CD8-positive, alpha-beta T cell (primary cell): ENCODE measurements at regions of chr1 and their contacts with region 1.

Region 1: GRCh38 chr1:6784560-6785317 is 515 bp upstream of the CAMTA1 start:
- DNase-seq: peak; percentile 97 to 100 (median 99)
- ATAC-seq: peak; percentile 81
- H3K4me3 ChIP-seq: peak overlapping the region; percentile 80
- H3K4me3 Mint-ChIP-seq: peak overlapping the region; percentile 95
- H3K27ac ChIP-seq: peak overlapping the region; percentile 73 to 93
- H3K27ac Mint-ChIP-seq: peak overlapping the region; percentile 91
- H3K4me1 ChIP-seq: peaks cover 25% of the 10 kb centered on the region
- H3K4me1 Mint-ChIP-seq: peaks cover 44% of the 10 kb centered on the region
- H3K27me3 ChIP-seq: no peaks in the 10 kb centered on the region
- H3K27me3 Mint-ChIP-seq: no peaks in the 10 kb centered on the region
- CTCF ChIP-seq: no peak

Region 2: DNA sequence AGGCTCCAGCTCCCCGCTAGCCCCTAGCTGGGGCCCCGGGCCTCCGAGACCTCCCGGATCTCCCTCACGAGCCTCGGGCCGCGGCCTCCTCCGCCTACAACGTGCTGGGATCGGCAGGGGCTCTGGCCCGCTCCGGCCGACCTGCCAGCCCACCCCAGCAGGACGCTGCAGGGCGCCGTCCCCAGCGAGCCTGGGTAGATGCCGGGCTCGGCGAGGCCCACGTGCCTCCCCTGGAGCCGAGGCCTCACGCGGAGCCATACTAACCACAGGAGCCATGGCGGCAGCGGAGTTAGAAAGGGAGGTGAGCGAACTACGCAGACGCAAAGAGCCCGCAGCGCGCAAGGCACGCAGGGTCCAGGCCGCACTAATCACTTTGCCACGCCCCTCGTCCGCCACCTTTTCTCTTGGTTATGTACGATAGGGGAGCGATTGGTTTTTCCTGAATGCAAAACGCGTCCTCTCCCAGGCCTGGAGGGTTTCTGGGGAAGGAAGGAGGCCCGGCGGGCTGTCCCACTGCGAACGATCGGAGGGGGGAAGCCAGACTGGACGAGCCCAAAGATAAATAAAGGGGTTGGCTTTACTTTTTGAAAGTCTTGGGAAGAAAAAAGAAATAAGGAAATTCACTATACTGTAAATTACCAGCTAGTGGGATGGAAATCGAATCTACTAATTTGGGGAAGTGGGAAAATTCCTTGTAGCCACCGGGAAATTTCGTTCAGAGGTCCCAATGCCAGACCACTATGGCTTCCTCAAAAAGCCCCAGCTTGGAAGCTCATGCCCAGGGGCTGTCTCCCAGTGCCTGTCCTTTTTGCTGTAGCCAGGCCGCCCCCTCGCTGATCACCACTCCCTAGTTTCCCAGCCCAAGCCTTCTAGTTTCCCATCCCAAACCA is 585.2 kb before region 1 on chr1 and contains the start of gene RPL22:
- CTCF ChIA-PET with region 1: no interaction called
- POLR2A ChIA-PET with region 1: no interaction called
- intact Hi-C with region 1: loop called (anchors 2 to 5 kb)
- DNase-seq: peak; percentile 93 to 99 (median 97)
- ATAC-seq: peak; percentile 97
- H3K4me3 ChIP-seq: peak within 1 kb of the TSS; percentile 83 to 97
- H3K4me3 Mint-ChIP-seq: peak within 1 kb of the TSS; percentile 84
- H3K27ac ChIP-seq: peak within 1 kb of the TSS; percentile 68 to 82
- H3K27ac Mint-ChIP-seq: peak within 1 kb of the TSS; percentile 92
- H3K4me1 ChIP-seq: peaks cover 24% of the 10 kb centered on the region
- H3K4me1 Mint-ChIP-seq: peaks cover 42% of the 10 kb centered on the region
- H3K27me3 ChIP-seq: no peaks in the 10 kb centered on the region
- H3K27me3 Mint-ChIP-seq: no peaks in the 10 kb centered on the region
- CTCF ChIP-seq: no peak
- total RNA-seq, gene RPL22: 565 to 567 TPM

Region 3: GRCh38 chr1:6701437-6702153 is 83.1 kb before region 1 on chr1 and contains the start of gene DNAJC11:
- CTCF ChIA-PET with region 1: interaction called, 3 read pairs
- POLR2A ChIA-PET with region 1: interaction called, 3 read pairs
- intact Hi-C with region 1: loop called (anchors 1 kb)
- DNase-seq: peak; percentile 82 to 96 (median 89)
- ATAC-seq: peak; percentile 96
- H3K4me3 ChIP-seq: peak within 1 kb of the TSS; percentile 79 to 87
- H3K4me3 Mint-ChIP-seq: peak within 1 kb of the TSS; percentile 94
- H3K27ac ChIP-seq: peak within 1 kb of the TSS; percentile 68 to 70
- H3K27ac Mint-ChIP-seq: peak within 1 kb of the TSS; percentile 95
- H3K4me1 ChIP-seq: peaks cover 11% of the 10 kb centered on the region
- H3K4me1 Mint-ChIP-seq: peaks cover 25% of the 10 kb centered on the region
- H3K27me3 ChIP-seq: no peaks in the 10 kb centered on the region
- H3K27me3 Mint-ChIP-seq: no peaks in the 10 kb centered on the region
- CTCF ChIP-seq: peak; percentile 89
- total RNA-seq, gene DNAJC11: 23.3 to 24.4 TPM

Region 4: GRCh38 chr1:7704214-7705047 is 919.7 kb after region 1 on chr1:
- CTCF ChIA-PET with region 1: no interaction called
- POLR2A ChIA-PET with region 1: no interaction called
- intact Hi-C with region 1: loop called in 1 of 2 experiments (anchors 5 kb)
- DNase-seq: peak; percentile 82 to 92 (median 90)
- ATAC-seq: peak; percentile 95
- H3K4me3 ChIP-seq: no peak overlapping the region
- H3K4me3 Mint-ChIP-seq: peak overlapping the region; percentile 78
- H3K27ac ChIP-seq: no peak overlapping the region
- H3K27ac Mint-ChIP-seq: no peak overlapping the region
- H3K4me1 ChIP-seq: peaks cover 4% of the 10 kb centered on the region
- H3K4me1 Mint-ChIP-seq: peaks cover 14% of the 10 kb centered on the region
- H3K27me3 ChIP-seq: peaks cover 14 to 17% of the 10 kb centered on the region in 2 experiments
- H3K27me3 Mint-ChIP-seq: peaks cover 50% of the 10 kb centered on the region
- CTCF ChIP-seq: no peak

Region 5: GRCh38 chr1:7783826-7784491 is 999.2 kb after region 1 on chr1 and contains the start of gene PER3:
- CTCF ChIA-PET with region 1: no interaction called
- POLR2A ChIA-PET with region 1: no interaction called
- intact Hi-C with region 1: loop called in 1 of 2 experiments (anchors 10 kb)
- DNase-seq: peak; percentile 82 to 96 (median 89)
- ATAC-seq: peak; percentile 88
- H3K4me3 ChIP-seq: peak within 1 kb of the TSS; percentile 55 to 68
- H3K4me3 Mint-ChIP-seq: peak within 1 kb of the TSS; percentile 72
- H3K27ac ChIP-seq: peak within 1 kb of the TSS; percentile 76 to 88
- H3K27ac Mint-ChIP-seq: peak within 1 kb of the TSS; percentile 60
- H3K4me1 ChIP-seq: peaks cover 27% of the 10 kb centered on the region
- H3K4me1 Mint-ChIP-seq: peaks cover 30% of the 10 kb centered on the region
- H3K27me3 ChIP-seq: no peaks in the 10 kb centered on the region
- H3K27me3 Mint-ChIP-seq: no peaks in the 10 kb centered on the region
- CTCF ChIP-seq: no peak
- total RNA-seq, gene PER3: 8.7 to 10.2 TPM